ENCODE measurements at regions of chr20 and their contacts with region 1.

Region 1: GRCh38 chr20:14497004-14497403 is 159.6 kb upstream of the FLRT3 start:
- DNase-seq: no peak
- ATAC-seq: no peak
- H3K4me3 ChIP-seq: no peak overlapping the region
- H3K27ac ChIP-seq: no peak overlapping the region
- H3K4me1 ChIP-seq: no peaks in the 10 kb centered on the region
- H3K27me3 ChIP-seq: no peaks in the 10 kb centered on the region
- CTCF ChIP-seq: no peak
- POLR2A ChIP-seq: no peak

Region 2: GRCh38 chr20:14553774-14554534 is 57.0 kb after region 1 on chr20:
- in situ Hi-C with region 1: no loop called
- intact Hi-C with region 1: loop called (anchors 2 kb)
- DNase-seq: no peak
- ATAC-seq: no peak
- H3K4me3 ChIP-seq: no peak overlapping the region
- H3K27ac ChIP-seq: no peak overlapping the region
- H3K4me1 ChIP-seq: no peaks in the 10 kb centered on the region
- H3K27me3 ChIP-seq: no peaks in the 10 kb centered on the region
- CTCF ChIP-seq: no peak
- POLR2A ChIP-seq: no peak

Region 3: GRCh38 chr20:14582855-14583254 is 85.9 kb after region 1 on chr20:
- in situ Hi-C with region 1: no loop called
- intact Hi-C with region 1: no loop called
- DNase-seq: no peak
- ATAC-seq: peak; percentile 79 to 91
- H3K4me3 ChIP-seq: no peak overlapping the region
- H3K27ac ChIP-seq: no peak overlapping the region
- H3K4me1 ChIP-seq: no peaks in the 10 kb centered on the region
- H3K27me3 ChIP-seq: no peaks in the 10 kb centered on the region
- CTCF ChIP-seq: no peak
- POLR2A ChIP-seq: no peak

Measured in gastrocnemius medialis (tissue), 4 donors.